ENCODE measurements at regions of chr13 and their contacts with region 1.

Region 1: GRCh38 chr13:107124129-107124718 is 556.3 kb upstream of the ARGLU1 start:
- DNase-seq: peak in 1 of 2 experiments; percentile 62
- H3K4me3 ChIP-seq: no peak overlapping the region
- H3K4me3 Mint-ChIP-seq: no peak overlapping the region
- H3K27ac Mint-ChIP-seq: no peak overlapping the region
- H3K4me1 ChIP-seq: peaks cover 60% of the 10 kb centered on the region
- H3K4me1 Mint-ChIP-seq: peaks cover 31% of the 10 kb centered on the region
- H3K27me3 ChIP-seq: no peaks in the 10 kb centered on the region
- H3K27me3 Mint-ChIP-seq: no peaks in the 10 kb centered on the region
- CTCF ChIP-seq: peak; percentile 53 to 64

Region 2: GRCh38 chr13:106471957-106472543 is 652.2 kb before region 1 on chr13:
- CTCF ChIA-PET with region 1: no interaction called
- POLR2A ChIA-PET with region 1: no interaction called
- intact Hi-C with region 1: loop called (anchors 5 kb)
- DNase-seq: peak; percentile 81 to 93
- H3K4me3 ChIP-seq: peak overlapping the region; percentile 27
- H3K4me3 Mint-ChIP-seq: peak overlapping the region; percentile 71
- H3K27ac Mint-ChIP-seq: peak overlapping the region; percentile 84
- H3K4me1 ChIP-seq: peaks cover 69% of the 10 kb centered on the region
- H3K4me1 Mint-ChIP-seq: peaks cover 48% of the 10 kb centered on the region
- H3K27me3 ChIP-seq: no peaks in the 10 kb centered on the region
- H3K27me3 Mint-ChIP-seq: no peaks in the 10 kb centered on the region
- CTCF ChIP-seq: no peak

Region 3: GRCh38 chr13:106619688-106620555 is 504.3 kb before region 1 on chr13:
- CTCF ChIA-PET with region 1: interaction called, 3 read pairs
- POLR2A ChIA-PET with region 1: no interaction called
- intact Hi-C with region 1: loop called (anchors 1 kb)
- DNase-seq: peak in 1 of 2 experiments; percentile 53
- H3K4me3 ChIP-seq: 0 out of 2 replicates have a peak overlapping the region, but pooled peaks have one; percentile 2
- H3K4me3 Mint-ChIP-seq: peak overlapping the region; percentile 6
- H3K27ac Mint-ChIP-seq: no peak overlapping the region
- H3K4me1 ChIP-seq: peaks cover 8% of the 10 kb centered on the region; the same call in 1 of the 2 replicates
- H3K4me1 Mint-ChIP-seq: no peaks in the 10 kb centered on the region
- H3K27me3 ChIP-seq: no peaks in the 10 kb centered on the region
- H3K27me3 Mint-ChIP-seq: no peaks in the 10 kb centered on the region
- CTCF ChIP-seq: peak; percentile 80 to 90

Region 4: GRCh38 chr13:106835477-106835876 is 288.7 kb before region 1 on chr13:
- CTCF ChIA-PET with region 1: no interaction called
- POLR2A ChIA-PET with region 1: no interaction called
- intact Hi-C with region 1: loop called (anchors 10 kb)
- DNase-seq: no peak
- H3K4me3 ChIP-seq: no peak overlapping the region
- H3K4me3 Mint-ChIP-seq: no peak overlapping the region
- H3K27ac Mint-ChIP-seq: no peak overlapping the region
- H3K4me1 ChIP-seq: 0 out of 2 replicates have a peak, but pooled peaks cover 4% of the 10 kb centered on the region
- H3K4me1 Mint-ChIP-seq: peaks cover 6% of the 10 kb centered on the region
- H3K27me3 ChIP-seq: no peaks in the 10 kb centered on the region
- H3K27me3 Mint-ChIP-seq: no peaks in the 10 kb centered on the region
- CTCF ChIP-seq: no peak

Region 5: GRCh38 chr13:106958621-106959048 is 165.6 kb before region 1 on chr13:
- CTCF ChIA-PET with region 1: no interaction called
- POLR2A ChIA-PET with region 1: no interaction called
- intact Hi-C with region 1: loop called (anchors 1 kb)
- DNase-seq: peak; percentile 69 to 82
- H3K4me3 ChIP-seq: no peak overlapping the region
- H3K4me3 Mint-ChIP-seq: peak overlapping the region; percentile 65
- H3K27ac Mint-ChIP-seq: peak overlapping the region; percentile 92
- H3K4me1 ChIP-seq: peaks cover 69% of the 10 kb centered on the region
- H3K4me1 Mint-ChIP-seq: peaks cover 50% of the 10 kb centered on the region
- H3K27me3 ChIP-seq: no peaks in the 10 kb centered on the region
- H3K27me3 Mint-ChIP-seq: no peaks in the 10 kb centered on the region
- CTCF ChIP-seq: no peak

Region 6: DNA sequence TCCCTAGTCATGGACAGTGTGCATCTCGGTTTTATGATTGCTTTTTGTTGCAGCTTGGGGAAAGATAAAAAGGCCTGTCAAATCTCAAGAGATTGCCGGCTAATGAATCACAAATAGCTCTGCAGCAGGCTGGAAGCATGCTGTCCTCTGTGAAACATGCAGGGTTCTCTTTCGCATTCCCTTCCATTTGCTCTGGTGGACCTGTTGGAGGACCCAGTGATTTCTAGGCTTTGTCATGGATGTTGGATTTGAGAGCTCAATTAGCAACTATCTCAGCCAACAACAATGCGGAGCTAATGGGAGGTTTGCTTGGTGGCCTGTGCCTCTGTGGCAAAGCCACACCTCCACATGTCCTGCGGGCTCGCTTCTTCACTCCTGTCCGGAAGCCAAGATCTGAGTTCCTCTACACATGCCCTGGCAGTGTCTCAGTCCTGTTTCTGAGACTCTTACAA is 138.2 kb before region 1 on chr13:
- CTCF ChIA-PET with region 1: no interaction called
- POLR2A ChIA-PET with region 1: no interaction called
- intact Hi-C with region 1: no loop called
- DNase-seq: no peak
- H3K4me3 ChIP-seq: no peak overlapping the region
- H3K4me3 Mint-ChIP-seq: no peak overlapping the region
- H3K27ac Mint-ChIP-seq: peak overlapping the region; percentile 8
- H3K4me1 ChIP-seq: peaks cover 24% of the 10 kb centered on the region
- H3K4me1 Mint-ChIP-seq: peaks cover 37% of the 10 kb centered on the region
- H3K27me3 ChIP-seq: no peaks in the 10 kb centered on the region
- H3K27me3 Mint-ChIP-seq: no peaks in the 10 kb centered on the region
- CTCF ChIP-seq: no peak

Region 7: DNA sequence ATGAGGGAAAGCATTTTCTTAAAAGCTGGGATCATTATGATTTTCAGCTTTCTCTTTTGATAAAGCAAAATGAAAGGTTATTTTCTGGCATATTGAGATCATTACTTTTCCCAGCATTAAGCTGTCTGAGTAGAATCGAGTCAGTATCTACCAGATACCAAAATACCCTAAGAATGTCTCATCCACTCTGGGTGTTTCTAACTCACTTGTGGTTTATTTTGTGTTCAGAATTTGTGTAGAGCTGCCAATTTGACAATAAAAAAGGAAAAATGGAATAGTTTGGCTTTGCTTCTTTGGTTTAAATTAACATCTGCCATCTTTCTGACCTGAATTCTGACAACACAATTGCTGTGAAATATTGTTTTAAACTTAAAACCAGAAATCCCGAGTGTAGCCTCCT is 117.6 kb before region 1 on chr13:
- CTCF ChIA-PET with region 1: no interaction called
- POLR2A ChIA-PET with region 1: no interaction called
- intact Hi-C with region 1: loop called (anchors 1 kb)
- DNase-seq: no peak
- H3K4me3 ChIP-seq: peak overlapping the region; percentile 1; the same call in 1 of the 2 replicates
- H3K4me3 Mint-ChIP-seq: peak overlapping the region; percentile 62
- H3K27ac Mint-ChIP-seq: peak overlapping the region; percentile 83
- H3K4me1 ChIP-seq: peaks cover 43% of the 10 kb centered on the region
- H3K4me1 Mint-ChIP-seq: peaks cover 43% of the 10 kb centered on the region
- H3K27me3 ChIP-seq: no peaks in the 10 kb centered on the region
- H3K27me3 Mint-ChIP-seq: no peaks in the 10 kb centered on the region
- CTCF ChIP-seq: no peak

Region 8: DNA sequence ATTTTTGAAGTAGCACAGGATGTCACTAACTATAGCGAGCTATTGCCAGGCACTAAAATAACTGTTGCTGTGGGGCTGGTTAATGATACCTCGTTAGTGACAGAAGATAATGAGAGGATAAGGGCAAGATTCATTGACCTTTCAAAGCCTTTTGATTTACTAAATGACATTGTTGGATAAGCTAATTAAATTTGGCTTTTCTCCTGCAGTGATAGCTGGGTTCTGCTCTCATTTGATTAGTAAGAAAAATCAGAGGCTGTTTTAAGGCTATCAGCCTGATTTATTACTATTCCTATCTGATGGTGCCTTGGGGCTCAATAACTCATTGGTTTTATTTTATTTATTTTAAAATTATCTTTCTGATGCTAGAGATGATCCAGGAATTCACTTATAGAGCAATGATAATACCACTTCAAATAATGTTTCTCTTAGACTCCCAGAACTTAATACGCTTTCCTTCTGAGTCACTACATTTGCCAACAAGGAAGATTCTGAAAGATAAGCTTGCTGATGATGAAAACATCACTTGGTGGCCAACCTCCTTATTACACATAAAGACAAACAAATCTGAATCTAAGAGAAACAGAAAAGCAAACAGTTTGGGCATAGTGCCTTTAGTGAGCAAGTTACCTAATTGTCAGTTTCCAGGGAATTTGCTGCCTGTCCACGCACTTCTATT is 55.0 kb before region 1 on chr13:
- CTCF ChIA-PET with region 1: no interaction called
- POLR2A ChIA-PET with region 1: no interaction called
- intact Hi-C with region 1: no loop called
- DNase-seq: peak in 1 of 2 experiments; percentile 18
- H3K4me3 ChIP-seq: no peak overlapping the region
- H3K4me3 Mint-ChIP-seq: no peak overlapping the region
- H3K27ac Mint-ChIP-seq: no peak overlapping the region
- H3K4me1 ChIP-seq: peaks cover 7% of the 10 kb centered on the region; the same call in 1 of the 2 replicates
- H3K4me1 Mint-ChIP-seq: peaks cover 7% of the 10 kb centered on the region
- H3K27me3 ChIP-seq: no peaks in the 10 kb centered on the region
- H3K27me3 Mint-ChIP-seq: no peaks in the 10 kb centered on the region
- CTCF ChIP-seq: no peak